ENCODE measurements at regions of chr19 and their contacts with region 1.

Region 1: GRCh38 chr19:3762501-3763459 is at the start of gene MRPL54:
- DNase-seq: peak; percentile 97
- ATAC-seq: peak; percentile 91
- H3K4me3 ChIP-seq: peak within 1 kb of the TSS; percentile 84 to 99 (median 90)
- H3K27ac ChIP-seq: peak within 1 kb of the TSS; percentile 95
- H3K4me1 ChIP-seq: peaks cover 17% of the 10 kb centered on the region
- H3K27me3 ChIP-seq: no peaks in the 10 kb centered on the region; a peak in 1 of 5 replicates
- CTCF ChIP-seq: peak; percentile 32
- EP300 ChIP-seq: no peak
- POLR2A ChIP-seq: peak; percentile 75 to 95
- RAD21 ChIP-seq: peak; percentile 45; the same call in 1 of the 2 replicates
- total RNA-seq, gene MRPL54: 66.9 and 85.6 TPM in 2 replicates

Region 2: DNA sequence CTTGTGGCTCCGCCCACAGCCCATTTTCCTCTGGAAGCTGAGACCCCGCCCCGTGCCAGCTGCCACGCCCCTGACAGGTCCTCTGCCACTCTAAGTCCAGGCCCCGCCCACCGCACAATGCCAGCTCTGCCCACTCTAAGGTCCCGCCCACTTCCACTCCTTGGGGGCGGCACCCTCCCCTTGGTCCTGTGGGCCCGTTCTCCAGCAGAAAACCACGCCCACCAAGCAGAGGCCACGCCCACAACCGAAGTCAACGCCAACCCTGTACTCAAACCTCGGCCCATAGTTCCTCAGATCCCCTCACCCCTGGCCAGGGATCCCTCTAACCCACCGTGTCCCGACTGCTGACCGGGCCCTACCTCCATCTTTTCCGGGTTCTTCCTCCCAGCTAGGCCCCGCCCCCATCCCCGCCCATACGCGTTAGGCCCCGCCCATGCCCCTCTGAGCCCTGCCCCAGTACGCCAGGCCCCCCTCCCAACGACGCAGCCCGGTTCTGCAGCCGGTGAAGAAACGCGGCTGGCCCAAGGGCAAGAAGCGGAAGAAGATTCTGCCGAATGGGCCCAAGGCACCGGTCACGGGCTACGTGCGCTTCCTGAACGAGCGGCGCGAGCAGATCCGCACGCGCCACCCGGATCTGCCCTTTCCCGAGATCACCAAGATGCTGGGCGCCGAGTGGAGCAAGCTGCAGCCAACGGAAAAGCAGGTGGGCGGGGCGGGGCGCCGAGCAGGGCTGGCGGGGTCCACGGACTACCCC is 188.7 kb before region 1 on chr19:
- CTCF ChIA-PET with region 1: no interaction called
- POLR2A ChIA-PET with region 1: no interaction called
- in situ Hi-C with region 1: no loop called
- intact Hi-C with region 1: no loop called
- DNase-seq: peak; percentile 85
- ATAC-seq: peak; percentile 28
- H3K4me3 ChIP-seq: peak overlapping the region; percentile 81 to 94 (median 92); a peak in 4 of 6 replicates
- H3K27ac ChIP-seq: peak overlapping the region; percentile 63
- H3K4me1 ChIP-seq: peaks cover 34% of the 10 kb centered on the region
- H3K27me3 ChIP-seq: no peaks in the 10 kb centered on the region
- CTCF ChIP-seq: no peak
- EP300 ChIP-seq: no peak
- POLR2A ChIP-seq: no peak
- RAD21 ChIP-seq: no peak

Region 3: DNA sequence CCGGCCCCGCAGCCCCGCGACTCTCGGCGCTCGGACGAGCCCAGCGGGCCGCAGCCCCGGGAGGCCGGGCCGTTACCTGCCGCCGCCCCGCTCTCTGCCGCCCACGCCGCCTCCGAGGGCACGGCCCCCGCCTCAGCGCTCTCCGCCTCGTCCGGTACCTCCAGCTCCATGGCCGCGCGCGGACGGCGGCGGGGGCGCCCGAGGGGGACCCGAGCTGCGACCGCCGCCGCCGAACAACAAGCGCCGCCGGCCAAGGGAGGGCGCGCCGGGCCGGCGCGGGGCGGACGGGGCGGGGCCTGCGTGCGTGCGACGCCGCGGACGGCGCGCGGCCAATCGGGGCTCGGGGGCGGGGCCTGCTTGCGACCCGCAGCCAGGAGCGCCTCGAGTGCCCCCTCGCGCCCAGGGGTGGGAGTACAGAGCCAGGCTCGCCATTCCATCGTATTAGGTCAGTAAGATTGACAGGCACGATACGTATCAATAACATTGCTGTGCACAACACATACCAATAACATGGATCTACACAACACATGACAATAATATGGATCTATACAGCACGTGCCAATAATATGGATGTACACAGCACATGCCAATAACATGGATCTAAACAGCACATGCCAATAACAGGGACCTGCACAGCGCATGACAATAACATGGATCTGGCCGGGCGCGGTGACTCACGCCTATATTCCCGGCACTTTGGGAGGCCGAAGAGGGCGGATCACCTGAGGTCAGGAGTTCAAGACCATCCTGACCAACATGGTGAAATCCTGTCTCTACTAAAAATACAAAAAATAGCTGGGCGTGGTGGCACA is 62.4 kb before region 1 on chr19 and contains the start of gene PIP5K1C:
- CTCF ChIA-PET with region 1: no interaction called
- POLR2A ChIA-PET with region 1: no interaction called
- in situ Hi-C with region 1: no loop called
- intact Hi-C with region 1: loop called (anchors 10 kb)
- DNase-seq: peak; percentile 64
- ATAC-seq: peak; percentile 73
- H3K4me3 ChIP-seq: peak within 1 kb of the TSS; percentile 81 to 93 (median 89)
- H3K27ac ChIP-seq: peak within 1 kb of the TSS; percentile 18
- H3K4me1 ChIP-seq: peaks cover 15% of the 10 kb centered on the region
- H3K27me3 ChIP-seq: no peaks in the 10 kb centered on the region; a peak in 1 of 5 replicates
- CTCF ChIP-seq: peak; percentile 82
- EP300 ChIP-seq: no peak
- POLR2A ChIP-seq: peak in 1 of 2 experiments; percentile 44; a peak in 1 of 4 replicates
- RAD21 ChIP-seq: peak; percentile 81
- total RNA-seq, gene PIP5K1C: 4.3 and 5.2 TPM in 2 replicates

Region 4: GRCh38 chr19:3708208-3708931 is 54.4 kb before region 1 on chr19 and contains the start of gene TJP3:
- CTCF ChIA-PET with region 1: no interaction called
- POLR2A ChIA-PET with region 1: interaction called, 12 read pairs
- in situ Hi-C with region 1: no loop called
- intact Hi-C with region 1: loop called (anchors 10 kb)
- DNase-seq: peak; percentile 75
- ATAC-seq: peak; percentile 85
- H3K4me3 ChIP-seq: peak within 1 kb of the TSS; percentile 61 to 82 (median 77)
- H3K27ac ChIP-seq: peak within 1 kb of the TSS; percentile 85
- H3K4me1 ChIP-seq: peaks cover 60% of the 10 kb centered on the region
- H3K27me3 ChIP-seq: no peaks in the 10 kb centered on the region
- CTCF ChIP-seq: peak; percentile 63
- EP300 ChIP-seq: no peak; a peak in 1 of 4 replicates
- POLR2A ChIP-seq: peak; percentile 68 to 83
- RAD21 ChIP-seq: 0 out of 2 replicates have a peak, but pooled peaks have one; percentile 23
- total RNA-seq, gene TJP3: 20.6 and 21.5 TPM in 2 replicates

Region 5: GRCh38 chr19:3970808-3971598 is 208.2 kb after region 1 on chr19 and contains the start of gene DAPK3:
- CTCF ChIA-PET with region 1: no interaction called
- POLR2A ChIA-PET with region 1: interaction called, 10 read pairs
- in situ Hi-C with region 1: no loop called
- intact Hi-C with region 1: no loop called
- DNase-seq: peak; percentile 95
- ATAC-seq: peak; percentile 80
- H3K4me3 ChIP-seq: peak within 1 kb of the TSS; percentile 95 to 98 (median 97)
- H3K27ac ChIP-seq: peak within 1 kb of the TSS; percentile 72
- H3K4me1 ChIP-seq: peaks cover 28% of the 10 kb centered on the region
- H3K27me3 ChIP-seq: no peaks in the 10 kb centered on the region; a peak in 1 of 5 replicates
- CTCF ChIP-seq: no peak
- EP300 ChIP-seq: no peak
- POLR2A ChIP-seq: peak; percentile 50 to 68
- RAD21 ChIP-seq: no peak; the same call in 1 of the 2 replicates
- total RNA-seq, gene DAPK3: 22.0 and 30.5 TPM in 2 replicates

Measured in HepG2 (cell line).